Naive thymus-derived CD4-positive, alpha-beta T cell (primary cell): ENCODE measurements at regions of chr10 and their contacts with region 1.

Region 1: DNA sequence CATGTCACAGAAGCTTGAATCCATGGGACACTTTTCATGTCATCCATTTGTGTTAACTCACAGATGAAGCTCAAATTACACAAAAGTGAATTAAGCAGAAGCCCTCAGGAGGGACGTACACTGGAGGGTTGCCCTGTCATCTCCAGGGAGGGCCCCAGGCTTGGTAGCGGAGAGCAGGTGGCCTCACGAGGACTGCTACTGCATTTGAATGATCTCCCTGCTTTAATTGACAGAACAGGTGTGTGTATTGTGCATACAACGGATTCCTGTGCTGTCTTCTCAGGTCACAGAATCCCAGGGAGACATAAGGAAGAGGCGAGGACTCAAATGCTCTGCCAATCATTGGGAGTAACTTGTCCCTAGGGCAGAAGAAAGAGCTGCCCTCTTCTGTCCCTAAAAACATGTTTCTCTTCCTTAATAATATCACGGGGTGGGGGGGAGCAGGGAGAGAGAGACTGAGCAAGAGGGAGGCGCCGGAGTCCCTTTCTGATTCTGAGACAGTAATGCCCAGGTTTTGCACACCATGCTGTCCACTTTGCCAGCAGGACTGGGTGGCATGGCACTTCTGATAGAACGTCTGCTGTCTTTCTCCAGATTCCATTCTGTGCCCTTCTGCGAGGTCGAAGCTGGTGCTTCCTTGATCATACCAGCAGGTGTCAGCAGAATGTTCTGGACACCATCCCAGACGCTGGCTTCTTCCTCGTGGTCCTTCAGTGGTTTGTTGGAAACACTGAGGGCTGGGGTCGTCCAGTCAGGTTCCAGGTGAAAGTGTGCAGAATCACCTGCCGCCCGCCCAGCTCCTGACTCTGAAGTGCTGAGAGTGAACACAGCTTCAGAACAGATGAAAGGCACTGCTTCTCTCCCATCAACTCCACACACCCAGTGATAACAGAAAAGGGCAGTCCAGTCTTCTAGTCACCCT is 26.2 kb upstream of the RASGEF1A start:
- DNase-seq: peak in 6 of 9 donors; percentile 22 to 51 (median 44)
- ATAC-seq: peak; percentile 72
- H3K4me3 ChIP-seq: no peak overlapping the region
- H3K4me3 Mint-ChIP-seq: peak overlapping the region; percentile 13 to 75 (median 55)
- H3K27ac ChIP-seq: no peak overlapping the region
- H3K27ac Mint-ChIP-seq: peak overlapping the region in 6 of 9 donors; percentile 65 to 84 (median 78)
- H3K4me1 ChIP-seq: peaks cover 31 to 35% of the 10 kb centered on the region in 2 donors
- H3K4me1 Mint-ChIP-seq: peaks cover 16 to 83% (median 34%) of the 10 kb centered on the region in 7 donors
- H3K27me3 ChIP-seq: no peaks in the 10 kb centered on the region
- H3K27me3 Mint-ChIP-seq: peaks cover 0 to 15% (median 6%) of the 10 kb centered on the region in 5 donors

Region 2: GRCh38 chr10:43336641-43337318 is 43.8 kb after region 1 on chr10:
- CTCF ChIA-PET with region 1: interaction called, 4 read pairs
- POLR2A ChIA-PET with region 1: no interaction called
- intact Hi-C with region 1: loop called in 1 of 2 experiments (anchors 1 kb)
- DNase-seq: no peak
- ATAC-seq: no peak
- H3K4me3 ChIP-seq: no peak overlapping the region
- H3K4me3 Mint-ChIP-seq: no peak overlapping the region
- H3K27ac ChIP-seq: no peak overlapping the region
- H3K27ac Mint-ChIP-seq: no peak overlapping the region
- H3K4me1 ChIP-seq: peaks cover 11 to 12% of the 10 kb centered on the region in 2 donors
- H3K4me1 Mint-ChIP-seq: peaks cover 14 to 51% (median 18%) of the 10 kb centered on the region in 7 donors
- H3K27me3 ChIP-seq: no peaks in the 10 kb centered on the region
- H3K27me3 Mint-ChIP-seq: peaks cover 5 to 29% (median 12%) of the 10 kb centered on the region in 5 donors

Region 3: DNA sequence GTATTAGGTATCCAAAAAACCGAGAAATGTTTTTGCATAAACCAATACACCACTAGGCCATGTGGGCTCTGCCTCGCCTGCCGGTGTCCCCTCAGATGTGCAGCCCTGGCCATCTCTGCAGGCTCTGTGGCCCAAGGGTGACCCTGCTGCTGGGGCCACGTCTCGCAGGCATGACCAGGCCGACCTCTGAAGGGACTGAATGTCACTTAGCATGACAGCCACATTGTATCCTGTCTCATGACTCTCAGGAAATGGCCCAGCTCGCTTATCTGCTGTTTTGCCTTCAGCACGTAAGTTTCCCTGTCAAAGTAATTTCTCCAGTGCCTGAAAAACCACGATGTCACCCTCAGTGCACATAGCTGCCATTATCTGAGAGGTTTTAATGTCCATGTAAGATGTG is 405.1 kb after region 1 on chr10:
- CTCF ChIA-PET with region 1: no interaction called
- POLR2A ChIA-PET with region 1: no interaction called
- intact Hi-C with region 1: no loop called
- DNase-seq: no peak
- ATAC-seq: no peak
- H3K4me3 ChIP-seq: no peak overlapping the region
- H3K4me3 Mint-ChIP-seq: no peak overlapping the region
- H3K27ac ChIP-seq: no peak overlapping the region
- H3K27ac Mint-ChIP-seq: no peak overlapping the region
- H3K4me1 ChIP-seq: no peaks in the 10 kb centered on the region
- H3K4me1 Mint-ChIP-seq: no peaks in the 10 kb centered on the region
- H3K27me3 ChIP-seq: no peaks in the 10 kb centered on the region
- H3K27me3 Mint-ChIP-seq: peaks cover 2 to 13% (median 5%) of the 10 kb centered on the region in 5 donors